MCF 10A (cell line): ENCODE measurements at regions of chr3 and their contacts with region 1.

Region 1: GRCh38 chr3:46935168-46935858 is 41.2 kb downstream of the CCDC12 start:
- DNase-seq: peak; percentile 92
- H3K4me3 Mint-ChIP-seq: peak overlapping the region; percentile 25
- H3K27ac Mint-ChIP-seq: peak overlapping the region; percentile 79
- H3K4me1 Mint-ChIP-seq: peaks cover 48% of the 10 kb centered on the region
- H3K27me3 Mint-ChIP-seq: no peaks in the 10 kb centered on the region
- CTCF ChIP-seq: peak; percentile 42

Region 2: GRCh38 chr3:46976326-46977190 is 41.2 kb after region 1 on chr3 and contains the start of gene CCDC12:
- CTCF ChIA-PET with region 1: interaction called, 8 read pairs
- POLR2A ChIA-PET with region 1: interaction called, 32 read pairs
- intact Hi-C with region 1: loop called (anchors 1 kb)
- DNase-seq: peak; percentile 100
- H3K4me3 Mint-ChIP-seq: peak within 1 kb of the TSS; percentile 97
- H3K27ac Mint-ChIP-seq: peak within 1 kb of the TSS; percentile 100
- H3K4me1 Mint-ChIP-seq: peaks cover 30% of the 10 kb centered on the region
- H3K27me3 Mint-ChIP-seq: no peaks in the 10 kb centered on the region
- CTCF ChIP-seq: no peak
- total RNA-seq, gene CCDC12: 43.9 and 45.9 TPM in 2 replicates

Region 3: GRCh38 chr3:47133641-47134040 is 198.3 kb after region 1 on chr3:
- CTCF ChIA-PET with region 1: no interaction called
- POLR2A ChIA-PET with region 1: no interaction called
- intact Hi-C with region 1: no loop called
- DNase-seq: no peak
- H3K4me3 Mint-ChIP-seq: no peak overlapping the region
- H3K27ac Mint-ChIP-seq: no peak overlapping the region
- H3K4me1 Mint-ChIP-seq: peaks cover 11% of the 10 kb centered on the region
- H3K27me3 Mint-ChIP-seq: no peaks in the 10 kb centered on the region
- CTCF ChIP-seq: no peak